Left colon (tissue), 2 donors: ENCODE measurements at regions of chr22 and their contacts with region 1.

Region 1: GRCh38 chr22:40939202-40939601 is 12.0 kb upstream of the RBX1 start:
- DNase-seq: no peak
- ATAC-seq: no peak

Region 2: GRCh38 chr22:40651563-40652501 is 287.4 kb before region 1 on chr22:
- intact Hi-C with region 1: no loop called
- DNase-seq: peak; percentile 77 to 92
- ATAC-seq: peak; percentile 73

Region 3: GRCh38 chr22:40898850-40899357 is 40.3 kb before region 1 on chr22:
- intact Hi-C with region 1: no loop called
- DNase-seq: no peak
- ATAC-seq: peak; percentile 88

Region 4: DNA sequence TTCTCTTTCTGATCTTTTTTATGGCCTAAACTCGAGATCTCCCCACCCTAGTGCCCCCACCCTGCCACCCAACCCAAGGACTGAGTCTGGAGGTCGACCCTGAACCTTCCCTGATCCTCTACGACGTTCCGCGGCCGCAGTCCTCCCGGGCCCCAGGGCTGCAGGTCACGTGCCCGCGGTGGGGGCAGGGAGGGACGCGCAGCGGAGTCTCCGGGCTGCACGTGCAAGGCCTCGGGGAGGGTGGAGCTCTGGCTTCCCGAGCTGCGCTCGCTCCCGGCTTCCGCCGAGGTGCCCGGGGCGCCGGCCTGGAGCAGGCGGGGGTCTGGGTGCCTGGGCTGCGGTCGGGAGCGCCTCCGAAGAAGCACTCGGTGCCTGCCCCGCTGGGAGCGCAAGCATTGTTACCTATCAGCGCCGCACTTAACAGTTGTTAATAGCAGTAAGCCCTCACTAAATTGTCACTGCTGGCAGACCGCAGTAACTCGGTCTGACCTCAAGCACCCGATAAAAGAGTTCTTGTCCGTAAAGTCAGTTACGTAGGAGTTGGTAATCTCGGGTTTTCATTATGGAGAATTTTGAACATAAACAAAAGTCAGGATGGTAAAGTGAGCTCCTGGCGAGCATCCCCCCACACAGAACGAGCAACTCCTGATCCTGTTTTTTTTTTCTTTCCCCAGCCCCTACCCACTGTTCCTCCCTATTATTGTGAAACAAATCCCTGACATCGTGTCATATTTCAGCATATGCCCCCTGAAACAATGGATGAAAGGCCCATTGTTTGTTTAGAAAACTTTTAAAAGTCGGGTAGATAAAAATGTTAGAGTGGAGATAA is 83.5 kb after region 1 on chr22:
- intact Hi-C with region 1: no loop called
- DNase-seq: peak; percentile 95 to 96
- ATAC-seq: peak; percentile 85

Region 5: DNA sequence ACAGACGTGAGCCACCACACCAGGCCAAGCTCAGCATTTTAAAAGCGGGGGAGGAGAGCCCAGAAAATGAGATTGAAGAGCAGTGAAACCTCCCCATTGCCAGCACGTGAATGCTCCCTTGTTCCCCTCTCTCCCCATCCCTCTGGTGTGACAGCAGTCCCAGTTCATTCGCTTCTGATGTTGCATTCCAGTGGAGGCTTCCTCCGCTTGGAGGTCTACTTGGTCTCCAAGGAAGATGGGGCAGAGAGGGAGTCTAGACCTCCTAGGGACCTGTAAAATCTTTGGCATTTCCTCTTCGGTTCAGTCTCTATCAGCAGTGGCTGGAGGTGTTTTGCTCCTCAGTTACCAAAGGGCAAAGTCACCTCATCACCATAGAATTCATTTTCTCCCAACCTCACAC is 122.9 kb after region 1 on chr22:
- intact Hi-C with region 1: no loop called
- DNase-seq: no peak
- ATAC-seq: no peak

Region 6: DNA sequence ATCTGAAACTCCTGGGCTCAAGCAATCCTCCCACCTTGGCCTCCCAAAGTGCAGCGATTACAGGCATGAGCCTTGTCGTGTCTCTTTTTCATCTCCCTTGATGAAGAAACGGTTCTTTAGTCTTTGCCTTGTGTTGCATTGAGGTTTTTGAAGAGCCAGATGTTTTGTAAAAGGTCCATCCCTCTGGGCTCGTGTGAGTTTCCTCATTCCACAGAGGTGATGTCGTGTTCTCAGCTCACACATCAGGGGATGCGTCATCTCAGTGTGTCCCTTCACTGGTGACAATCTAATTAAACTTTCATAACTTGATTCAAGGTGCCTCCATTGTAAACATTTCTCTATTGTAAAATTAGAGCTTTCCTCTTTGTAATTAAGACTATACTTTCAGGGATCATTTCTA is 412.8 kb after region 1 on chr22:
- intact Hi-C with region 1: loop called in 1 of 2 experiments (anchors 10 kb)
- DNase-seq: no peak
- ATAC-seq: peak; percentile 21